Kidney (tissue), 22 donors: ENCODE measurements at regions of chr12 and their contacts with region 1.

Region 1: GRCh38 chr12:49358483-49359141 is 8.7 kb upstream of the SPATS2 start:
- DNase-seq: peak in 3 of 5 donors; percentile 73 to 91 (median 89)
- H3K4me3 ChIP-seq: no peak overlapping the region
- H3K27ac ChIP-seq: no peak overlapping the region
- H3K4me1 ChIP-seq: no peaks in the 10 kb centered on the region
- H3K27me3 ChIP-seq: no peaks in the 10 kb centered on the region
- CTCF ChIP-seq: peak; percentile 85

Region 2: DNA sequence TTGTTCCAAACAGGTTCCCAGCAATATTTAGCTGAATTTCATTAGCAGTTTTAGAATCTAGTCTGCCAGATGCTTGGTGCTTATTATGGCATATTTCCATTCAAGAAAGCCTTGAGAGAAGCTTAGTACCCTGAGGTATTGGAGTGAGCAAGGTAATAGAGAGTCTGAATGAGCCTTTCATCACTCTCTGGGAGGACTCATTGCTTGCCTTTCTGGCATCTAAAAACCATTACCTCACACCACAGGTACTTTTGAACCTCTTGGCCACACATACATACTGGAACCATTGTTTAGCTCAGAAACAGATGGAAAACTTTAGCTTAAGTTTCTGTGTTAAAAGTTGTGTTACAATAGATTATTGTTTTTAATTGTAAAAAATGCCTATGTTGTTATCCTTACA is 152.8 kb after region 1 on chr12:
- intact Hi-C with region 1: loop called (anchors 5 kb)
- DNase-seq: peak in 2 of 5 donors; percentile 10 to 19
- H3K4me3 ChIP-seq: no peak overlapping the region
- H3K27ac ChIP-seq: no peak overlapping the region
- H3K4me1 ChIP-seq: no peaks in the 10 kb centered on the region
- H3K27me3 ChIP-seq: no peaks in the 10 kb centered on the region
- CTCF ChIP-seq: no peak

Region 3: GRCh38 chr12:49651855-49652254 is 293.2 kb after region 1 on chr12:
- intact Hi-C with region 1: no loop called
- DNase-seq: peak in 1 of 5 donors; percentile 64
- H3K4me3 ChIP-seq: no peak overlapping the region
- H3K27ac ChIP-seq: no peak overlapping the region
- H3K4me1 ChIP-seq: peaks cover 0 to 11% (median 0%) of the 10 kb centered on the region in 3 donors
- H3K27me3 ChIP-seq: no peaks in the 10 kb centered on the region
- CTCF ChIP-seq: no peak